ENCODE measurements at regions of chr1 and their contacts with region 1.

Region 1: DNA sequence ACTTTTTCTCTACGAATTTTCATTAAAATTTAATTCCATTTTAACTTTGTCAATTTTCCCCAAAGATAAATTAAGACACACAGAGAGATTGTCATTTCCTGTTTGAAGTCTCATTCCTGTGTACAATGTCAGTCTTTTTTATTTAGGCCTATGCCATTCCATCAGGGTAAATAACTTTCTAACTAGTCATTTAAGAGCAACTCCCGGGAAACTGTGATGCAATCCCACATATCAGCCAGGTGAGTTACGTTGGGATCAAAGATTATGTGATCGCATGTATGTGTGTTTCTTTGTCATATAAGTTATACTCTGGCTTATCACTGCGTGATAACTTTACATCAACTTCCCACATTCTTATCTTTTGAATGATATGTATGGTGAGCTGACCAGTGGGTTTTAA is 86.1 kb upstream of the S1PR1 start:
- DNase-seq: no peak
- H3K4me3 Mint-ChIP-seq: no peak overlapping the region
- H3K27ac Mint-ChIP-seq: no peak overlapping the region
- H3K4me1 Mint-ChIP-seq: peaks cover 8% of the 10 kb centered on the region
- H3K27me3 Mint-ChIP-seq: no peaks in the 10 kb centered on the region
- CTCF ChIP-seq: no peak

Region 2: GRCh38 chr1:101089613-101090338 is 60.9 kb before region 1 on chr1:
- CTCF ChIA-PET with region 1: no interaction called
- intact Hi-C with region 1: loop called (anchors 10 kb)
- DNase-seq: no peak
- H3K4me3 Mint-ChIP-seq: no peak overlapping the region
- H3K27ac Mint-ChIP-seq: no peak overlapping the region
- H3K4me1 Mint-ChIP-seq: no peaks in the 10 kb centered on the region
- H3K27me3 Mint-ChIP-seq: no peaks in the 10 kb centered on the region
- CTCF ChIP-seq: no peak

Region 3: DNA sequence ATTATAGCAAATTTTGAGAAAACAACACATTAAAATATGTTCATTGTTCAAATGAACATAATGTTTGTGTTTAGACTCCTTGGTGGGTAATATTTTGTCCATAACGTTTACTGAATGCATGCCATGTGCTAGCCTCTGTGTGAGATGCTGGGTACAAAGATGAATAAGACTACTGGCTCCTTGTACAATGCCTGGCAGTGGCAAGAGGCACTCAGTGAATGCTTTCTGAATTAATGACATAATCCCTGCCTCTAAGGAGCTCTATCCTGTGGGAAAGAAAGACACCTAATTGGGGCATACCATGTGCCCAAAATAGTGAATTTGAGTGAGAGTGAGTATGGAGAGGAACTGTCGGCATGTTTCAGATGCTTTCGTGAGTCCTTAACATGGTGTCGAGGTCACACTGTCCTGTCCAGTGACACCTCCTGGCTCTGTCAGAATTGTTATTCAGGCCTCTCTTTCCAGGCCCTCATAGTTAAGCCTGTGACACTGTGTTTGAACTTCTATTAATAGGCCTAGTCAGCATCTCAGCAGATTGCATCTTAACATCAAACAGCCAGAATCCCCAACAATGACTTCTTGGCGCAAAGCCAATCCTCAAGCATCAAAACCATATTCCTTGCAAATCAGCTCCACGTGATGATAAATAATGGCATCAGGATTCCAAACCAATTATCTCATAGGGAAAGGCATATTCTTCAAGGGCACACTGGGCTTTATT is 53.3 kb after region 1 on chr1:
- CTCF ChIA-PET with region 1: no interaction called
- intact Hi-C with region 1: no loop called
- DNase-seq: no peak
- H3K4me3 Mint-ChIP-seq: no peak overlapping the region
- H3K27ac Mint-ChIP-seq: no peak overlapping the region
- H3K4me1 Mint-ChIP-seq: no peaks in the 10 kb centered on the region
- H3K27me3 Mint-ChIP-seq: no peaks in the 10 kb centered on the region
- CTCF ChIP-seq: no peak